ENCODE measurements at regions of chr18 and their contacts with region 1.

Region 1: GRCh38 chr18:50819728-50820378 is at the start of gene MRO:
- DNase-seq: peak; percentile 87
- CTCF ChIP-seq: peak; percentile 96

Region 2: DNA sequence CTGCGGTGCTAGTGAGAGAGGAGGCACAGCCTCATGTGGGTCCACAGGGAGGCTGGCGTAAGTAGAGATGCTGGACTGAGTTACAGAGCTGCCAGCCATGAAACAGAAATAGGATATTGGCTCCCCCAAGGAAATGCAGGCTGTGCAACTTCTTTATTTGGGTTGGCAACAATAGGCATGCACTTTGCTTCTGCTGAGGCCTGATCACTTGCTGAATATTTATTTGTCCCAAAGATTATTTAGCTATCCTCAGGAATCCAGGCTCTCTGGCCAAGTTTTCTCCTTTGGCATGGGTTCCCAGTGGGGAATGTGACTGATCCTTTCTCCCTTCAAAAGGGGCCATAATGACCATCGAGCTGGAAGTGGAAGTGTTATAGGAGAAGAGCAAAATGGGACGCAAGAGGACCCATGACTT is 200.0 kb before region 1 on chr18:
- CTCF ChIA-PET with region 1: no interaction called
- POLR2A ChIA-PET with region 1: no interaction called
- DNase-seq: no peak
- CTCF ChIP-seq: no peak

Region 3: DNA sequence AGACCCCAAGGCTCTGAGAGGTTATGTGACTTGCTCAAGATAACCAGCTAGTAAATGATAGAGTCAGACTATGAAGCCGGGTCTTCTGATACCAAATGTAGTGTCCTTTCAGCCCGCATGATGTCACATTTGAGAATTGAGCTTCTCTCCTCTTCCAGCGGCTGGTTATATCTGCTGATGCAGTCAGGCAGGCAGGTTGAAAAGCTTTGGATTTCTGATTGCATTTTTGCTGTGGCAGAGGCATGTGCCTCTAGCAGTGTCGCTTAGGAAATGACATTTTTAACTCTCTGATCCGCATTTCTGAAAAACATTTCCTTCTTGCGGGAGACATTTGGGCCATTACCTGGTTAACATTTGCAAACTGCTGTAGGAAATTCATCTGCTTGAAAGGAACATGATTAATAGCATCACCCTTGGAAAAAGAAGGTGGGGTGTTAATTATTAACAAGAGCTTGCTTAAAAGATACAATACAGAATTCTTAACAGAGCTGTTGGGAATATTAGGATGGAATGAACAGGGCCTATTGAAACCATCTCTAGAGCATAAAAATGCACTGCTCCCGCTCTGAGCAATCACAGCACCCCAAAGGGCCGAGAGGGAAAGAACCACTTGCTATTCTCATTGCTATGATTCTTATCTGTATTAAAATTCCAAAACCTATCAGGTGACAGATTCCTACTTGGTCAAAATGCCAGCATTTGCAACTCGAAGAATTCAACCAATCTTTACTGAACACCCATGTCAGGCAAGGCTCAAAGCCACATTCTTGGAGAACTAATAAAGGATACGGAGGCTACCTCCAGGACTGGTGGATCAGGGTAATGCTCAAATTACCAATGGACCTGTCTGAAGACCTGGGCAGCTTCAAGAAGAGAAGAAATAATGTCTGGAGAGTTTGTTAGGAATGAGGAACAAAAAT is 25.9 kb before region 1 on chr18:
- CTCF ChIA-PET with region 1: no interaction called
- POLR2A ChIA-PET with region 1: no interaction called
- DNase-seq: no peak
- CTCF ChIP-seq: no peak

Region 4: DNA sequence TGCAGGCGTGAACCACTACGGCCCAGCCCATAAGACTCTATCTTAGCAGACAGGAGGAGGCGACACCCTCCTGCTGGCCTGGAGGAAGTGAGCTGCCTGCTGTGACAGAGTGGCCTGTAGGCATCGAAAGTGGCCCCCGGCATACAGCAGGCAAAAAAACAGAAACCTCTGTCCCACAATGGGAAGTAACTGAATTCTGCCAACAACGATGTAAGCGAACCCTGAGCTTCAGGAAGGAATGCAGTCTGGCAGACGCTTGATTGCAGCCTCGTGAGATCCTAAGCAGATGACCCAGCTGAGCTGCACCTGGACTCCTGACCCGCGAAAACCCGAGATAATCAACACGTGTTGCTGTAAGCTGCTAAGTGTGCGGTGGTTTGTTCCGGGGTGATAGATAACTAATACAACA is 13.6 kb before region 1 on chr18:
- CTCF ChIA-PET with region 1: interaction called, 34 read pairs
- POLR2A ChIA-PET with region 1: no interaction called
- DNase-seq: no peak
- CTCF ChIP-seq: no peak

Region 5: DNA sequence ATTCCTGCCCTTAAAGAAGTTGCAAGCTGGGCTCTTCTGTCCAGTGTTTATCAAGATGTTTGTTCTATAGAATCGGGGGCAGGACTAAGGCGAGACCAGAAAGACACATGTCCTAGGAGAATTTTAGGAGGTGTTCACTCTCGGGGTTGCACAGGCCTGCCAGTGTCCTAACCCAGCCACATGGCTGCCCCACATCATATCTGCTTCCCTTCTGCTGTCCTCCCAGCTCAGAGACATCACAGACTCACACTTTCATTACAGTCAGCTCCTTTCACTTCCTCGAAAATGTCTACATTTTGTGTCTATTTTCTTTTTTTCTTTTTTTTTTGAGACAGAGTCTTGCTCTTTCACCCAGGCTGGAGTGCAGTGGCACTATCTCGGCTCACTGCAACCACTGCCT is 10.7 kb after region 1 on chr18:
- CTCF ChIA-PET with region 1: interaction called, 56 read pairs
- POLR2A ChIA-PET with region 1: no interaction called
- DNase-seq: peak; percentile 48
- CTCF ChIP-seq: no peak

Region 6: GRCh38 chr18:50847192-50847591 is 27.3 kb after region 1 on chr18:
- CTCF ChIA-PET with region 1: interaction called, 13 read pairs
- POLR2A ChIA-PET with region 1: no interaction called
- DNase-seq: no peak
- CTCF ChIP-seq: no peak

Region 7: DNA sequence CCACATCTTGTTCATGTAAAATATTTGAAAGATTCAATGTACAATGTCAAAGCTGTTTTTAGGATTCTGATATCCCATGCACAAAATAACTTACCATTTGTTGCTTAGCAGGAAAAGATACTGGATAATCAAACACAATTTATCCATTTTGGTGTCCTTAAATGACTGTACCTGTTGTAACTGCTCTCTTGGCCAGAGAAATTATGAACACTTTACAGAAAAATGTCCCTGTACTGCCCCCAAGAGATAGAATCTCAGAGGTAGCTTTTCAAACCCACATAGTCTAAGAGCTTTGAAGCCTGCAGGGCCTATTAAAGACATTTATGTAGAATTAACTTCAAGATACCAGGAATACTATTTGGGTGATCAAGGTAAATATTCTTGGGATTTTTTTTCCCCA is 46.9 kb after region 1 on chr18:
- CTCF ChIA-PET with region 1: interaction called, 18 read pairs
- POLR2A ChIA-PET with region 1: no interaction called
- DNase-seq: peak; percentile 31
- CTCF ChIP-seq: peak; percentile 42

Region 8: GRCh38 chr18:51051105-51051712 is 231.4 kb after region 1 on chr18:
- CTCF ChIA-PET with region 1: interaction called, 15 read pairs
- POLR2A ChIA-PET with region 1: no interaction called
- DNase-seq: peak; percentile 30
- CTCF ChIP-seq: peak; percentile 70

Measured in GM10248 (cell line).